Natural killer cell (primary cell): ENCODE measurements at regions of chr2 and their contacts with region 1.

Region 1: DNA sequence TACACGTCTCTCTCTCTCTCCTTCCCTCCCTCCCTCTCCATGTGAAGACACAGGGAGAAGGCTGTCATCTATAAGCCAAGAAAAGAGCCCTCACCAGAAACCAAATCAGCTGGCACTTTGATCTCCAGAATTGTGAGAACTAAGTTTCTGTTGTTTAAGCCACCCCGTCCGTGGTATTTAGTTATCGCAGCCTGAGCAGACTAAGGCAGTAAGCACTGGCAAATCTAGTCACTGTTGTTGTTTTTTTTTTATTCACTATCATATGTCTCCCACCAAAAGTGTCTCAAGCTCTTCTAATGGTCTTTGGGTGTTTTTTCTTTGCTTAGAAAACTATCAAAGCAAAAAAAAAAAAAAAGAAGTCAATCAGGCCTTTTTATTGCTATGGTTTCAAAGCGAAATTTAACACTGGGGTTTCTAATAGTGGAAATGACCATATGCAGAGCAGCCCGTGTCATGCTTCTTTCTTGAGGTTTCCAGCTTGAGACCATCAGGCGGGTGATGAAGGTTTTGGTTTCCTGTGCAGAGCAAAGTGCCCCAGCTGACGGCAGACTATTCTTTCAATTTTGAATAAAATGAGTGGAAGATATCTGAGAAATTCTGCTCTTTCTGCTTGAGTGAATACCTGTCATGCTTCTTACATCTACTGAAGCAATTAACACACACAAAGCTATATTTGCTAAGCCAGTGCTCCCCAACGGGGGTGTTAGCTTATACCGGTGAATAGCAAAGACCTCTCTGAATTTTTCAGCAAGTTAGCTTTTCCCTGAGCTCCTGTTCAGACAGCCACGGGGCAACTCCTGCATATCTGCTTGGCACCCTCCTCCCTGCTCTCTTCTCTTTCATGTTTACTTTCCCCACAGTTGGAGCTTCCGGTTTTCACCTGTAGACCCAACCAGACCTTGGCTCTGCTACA is 394.1 kb upstream of the ATP5MC3 start:
- DNase-seq: peak; percentile 43 to 46
- ATAC-seq: peak; percentile 90 to 96 (median 96)
- H3K4me3 ChIP-seq: no peak overlapping the region
- H3K4me3 Mint-ChIP-seq: peak overlapping the region; percentile 81
- H3K27ac ChIP-seq: peak overlapping the region; percentile 54
- H3K27ac Mint-ChIP-seq: peak overlapping the region; percentile 88 to 89
- H3K4me1 ChIP-seq: peaks cover 22% of the 10 kb centered on the region
- H3K4me1 Mint-ChIP-seq: peaks cover 30 to 35% of the 10 kb centered on the region in 2 donors
- H3K27me3 ChIP-seq: peaks cover 6% of the 10 kb centered on the region
- H3K27me3 Mint-ChIP-seq: peaks cover 57 to 65% of the 10 kb centered on the region in 2 donors
- CTCF ChIP-seq: no peak

Region 2: DNA sequence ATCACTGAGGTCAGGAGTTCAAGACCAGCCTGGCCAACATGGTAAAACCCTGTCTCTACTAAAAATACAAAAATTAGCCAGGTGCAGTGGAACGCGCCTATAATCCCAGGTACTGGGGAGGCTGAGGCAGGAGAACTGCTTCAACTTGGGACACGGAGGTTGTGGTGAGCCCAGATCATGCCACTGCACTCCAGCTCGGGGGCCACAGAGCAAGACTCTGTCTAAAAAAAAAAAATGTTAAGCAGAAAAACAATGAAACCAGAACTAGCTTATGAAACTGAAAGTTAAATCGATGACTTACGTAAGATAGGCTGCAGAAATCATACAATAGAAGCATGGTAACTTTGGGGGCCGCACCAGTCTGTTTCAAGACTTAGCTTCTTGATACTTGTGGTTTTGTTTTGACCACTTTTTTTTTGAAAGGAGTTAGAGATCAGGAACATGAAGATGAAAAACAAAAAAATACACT is 1082.6 kb before region 1 on chr2:
- intact Hi-C with region 1: loop called (anchors 5 kb)
- DNase-seq: peak; percentile 42 to 89
- ATAC-seq: peak; percentile 91 to 93 (median 92)
- H3K4me3 ChIP-seq: peak overlapping the region; percentile 24
- H3K4me3 Mint-ChIP-seq: peak overlapping the region; percentile 86
- H3K27ac ChIP-seq: peak overlapping the region; percentile 96
- H3K27ac Mint-ChIP-seq: peak overlapping the region; percentile 93 to 95
- H3K4me1 ChIP-seq: peaks cover 32% of the 10 kb centered on the region
- H3K4me1 Mint-ChIP-seq: peaks cover 47 to 54% of the 10 kb centered on the region in 2 donors
- H3K27me3 ChIP-seq: no peaks in the 10 kb centered on the region
- H3K27me3 Mint-ChIP-seq: no peaks in the 10 kb centered on the region
- CTCF ChIP-seq: no peak

Region 3: GRCh38 chr2:175432021-175432420 is 143.6 kb before region 1 on chr2:
- intact Hi-C with region 1: no loop called
- DNase-seq: no peak
- ATAC-seq: no peak
- H3K4me3 ChIP-seq: no peak overlapping the region
- H3K4me3 Mint-ChIP-seq: no peak overlapping the region
- H3K27ac ChIP-seq: no peak overlapping the region
- H3K27ac Mint-ChIP-seq: no peak overlapping the region
- H3K4me1 ChIP-seq: no peaks in the 10 kb centered on the region
- H3K4me1 Mint-ChIP-seq: no peaks in the 10 kb centered on the region
- H3K27me3 ChIP-seq: no peaks in the 10 kb centered on the region
- H3K27me3 Mint-ChIP-seq: peaks cover 0 to 22% of the 10 kb centered on the region in 2 donors
- CTCF ChIP-seq: no peak

Region 4: DNA sequence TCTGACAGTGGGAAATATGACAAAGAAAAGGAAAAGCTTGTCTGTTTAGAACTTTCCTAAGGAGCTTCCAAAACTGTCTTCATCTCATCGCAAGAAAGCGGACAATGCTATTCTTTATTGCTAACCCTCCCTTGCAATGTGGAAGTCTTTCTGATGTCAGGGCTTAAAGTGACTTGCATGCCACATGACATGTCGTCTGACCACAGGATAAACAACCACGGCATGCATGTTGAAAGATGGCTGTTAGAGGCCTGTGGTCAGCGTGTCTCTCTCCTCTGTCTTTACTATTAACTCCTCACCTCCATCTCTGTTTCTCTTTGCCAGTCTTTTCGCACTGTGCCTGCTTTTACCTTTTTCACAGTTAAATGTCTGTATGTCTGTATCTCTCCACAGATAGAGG is 36.7 kb after region 1 on chr2:
- intact Hi-C with region 1: loop called (anchors 1 kb)
- DNase-seq: peak in 1 of 2 donors; percentile 29
- ATAC-seq: peak in 2 of 3 donors; percentile 46 to 83
- H3K4me3 ChIP-seq: no peak overlapping the region
- H3K4me3 Mint-ChIP-seq: no peak overlapping the region
- H3K27ac ChIP-seq: no peak overlapping the region
- H3K27ac Mint-ChIP-seq: no peak overlapping the region
- H3K4me1 ChIP-seq: no peaks in the 10 kb centered on the region
- H3K4me1 Mint-ChIP-seq: peaks cover 8 to 32% of the 10 kb centered on the region in 2 donors
- H3K27me3 ChIP-seq: no peaks in the 10 kb centered on the region
- H3K27me3 Mint-ChIP-seq: peaks cover 22 to 35% of the 10 kb centered on the region in 2 donors
- CTCF ChIP-seq: no peak

Region 5: DNA sequence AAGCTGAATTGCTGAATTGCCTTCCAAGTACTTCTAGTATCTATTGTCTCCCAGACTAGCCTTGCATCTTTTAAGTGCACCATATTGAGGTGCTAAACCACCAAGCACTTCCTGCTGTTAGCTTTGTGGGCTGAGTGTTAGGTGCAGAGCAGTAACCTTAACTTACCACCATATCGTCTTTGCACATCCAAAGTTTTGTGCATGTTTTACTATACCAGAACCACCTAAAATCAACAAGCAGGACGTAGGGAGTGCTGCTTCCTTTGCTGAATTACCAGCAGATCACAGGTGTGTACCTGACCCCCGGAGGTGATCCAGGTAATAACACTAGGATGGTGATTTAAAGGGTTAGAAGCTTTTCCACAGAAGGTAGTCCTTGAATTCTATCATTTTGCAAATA is 1277.1 kb after region 1 on chr2:
- intact Hi-C with region 1: loop called (anchors 5 kb)
- DNase-seq: peak; percentile 51 to 74
- ATAC-seq: peak; percentile 93 to 100 (median 96)
- H3K4me3 ChIP-seq: no peak overlapping the region
- H3K4me3 Mint-ChIP-seq: peak overlapping the region; percentile 62
- H3K27ac ChIP-seq: peak overlapping the region; percentile 4
- H3K27ac Mint-ChIP-seq: peak overlapping the region; percentile 38 to 49
- H3K4me1 ChIP-seq: peaks cover 21% of the 10 kb centered on the region
- H3K4me1 Mint-ChIP-seq: peaks cover 80 to 83% of the 10 kb centered on the region in 2 donors
- H3K27me3 ChIP-seq: no peaks in the 10 kb centered on the region
- H3K27me3 Mint-ChIP-seq: no peaks in the 10 kb centered on the region
- CTCF ChIP-seq: no peak